Activated T-helper 1 cell treated with anti-CD3 and anti-CD28 coated beads, Interleukin-12 subunit alpha, Interleukin-12 subunit beta, Interleukin-2, Interleukin-4 antibody, amounts not matched to agents 30 ng/mL and 10 ng/mL and 1 ng/mL, durations not matched to agents 14 hours and 24 hours and 36 hours (primary cell): ENCODE measurements at regions of chr21 and their contacts with region 1.

Region 1: GRCh38 chr21:32597205-32597604 is 11.9 kb upstream of the TCP10L start:
- DNase-seq: no peak
- H3K4me3 Mint-ChIP-seq: no peak overlapping the region
- H3K27ac Mint-ChIP-seq: no peak overlapping the region
- H3K4me1 Mint-ChIP-seq: no peaks in the 10 kb centered on the region
- H3K27me3 Mint-ChIP-seq: no peaks in the 10 kb centered on the region

Region 2: GRCh38 chr21:32392880-32393676 is 204.1 kb before region 1 on chr21 and contains the start of gene URB1:
- intact Hi-C with region 1: loop called (anchors 1 kb)
- DNase-seq: peak; percentile 89
- H3K4me3 Mint-ChIP-seq: peak within 1 kb of the TSS; percentile 91
- H3K27ac Mint-ChIP-seq: peak within 1 kb of the TSS; percentile 88
- H3K4me1 Mint-ChIP-seq: peaks cover 48% of the 10 kb centered on the region
- H3K27me3 Mint-ChIP-seq: peaks cover 3% of the 10 kb centered on the region
- total RNA-seq, gene URB1: 42.1 and 42.8 TPM in 2 replicates

Region 3: DNA sequence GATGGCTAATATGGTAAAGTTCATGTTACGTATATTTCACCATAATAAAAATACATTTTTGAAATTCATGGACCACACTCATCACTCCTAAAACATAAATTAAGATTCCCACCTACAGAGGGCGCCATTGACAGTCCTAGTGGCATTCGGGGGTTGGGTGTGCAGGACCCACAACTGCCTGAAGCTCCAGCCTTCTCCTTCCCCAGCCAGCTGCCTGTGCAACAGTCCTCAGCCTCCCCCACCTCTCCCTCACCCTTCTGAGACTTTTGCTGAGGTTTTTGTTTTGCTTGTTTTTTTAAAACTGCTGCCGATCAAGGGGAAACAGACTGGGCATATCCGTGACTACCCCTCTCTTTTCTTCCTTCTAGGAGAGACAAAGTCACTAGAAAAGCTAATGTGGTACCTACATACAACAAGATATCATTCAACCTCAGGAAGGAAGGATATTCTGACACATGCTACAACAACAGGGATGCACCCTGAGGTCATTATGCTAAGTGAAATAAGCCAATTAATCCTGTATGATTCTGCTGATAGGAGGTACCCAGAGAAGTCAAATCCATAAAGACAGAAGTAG is 193.9 kb before region 1 on chr21:
- intact Hi-C with region 1: loop called (anchors 1 kb)
- DNase-seq: peak; percentile 25
- H3K4me3 Mint-ChIP-seq: no peak overlapping the region
- H3K27ac Mint-ChIP-seq: no peak overlapping the region
- H3K4me1 Mint-ChIP-seq: peaks cover 10% of the 10 kb centered on the region
- H3K27me3 Mint-ChIP-seq: peaks cover 15% of the 10 kb centered on the region

Region 4: GRCh38 chr21:32412162-32413014 is 184.8 kb before region 1 on chr21 and contains the start of gene EVA1C:
- intact Hi-C with region 1: loop called (anchors 2 kb)
- DNase-seq: peak; percentile 39
- H3K4me3 Mint-ChIP-seq: peak within 1 kb of the TSS; percentile 94
- H3K27ac Mint-ChIP-seq: peak within 1 kb of the TSS; percentile 87
- H3K4me1 Mint-ChIP-seq: peaks cover 33% of the 10 kb centered on the region
- H3K27me3 Mint-ChIP-seq: peaks cover 12% of the 10 kb centered on the region
- total RNA-seq, gene EVA1C: 6.2 and 7.6 TPM in 2 replicates

Region 5: DNA sequence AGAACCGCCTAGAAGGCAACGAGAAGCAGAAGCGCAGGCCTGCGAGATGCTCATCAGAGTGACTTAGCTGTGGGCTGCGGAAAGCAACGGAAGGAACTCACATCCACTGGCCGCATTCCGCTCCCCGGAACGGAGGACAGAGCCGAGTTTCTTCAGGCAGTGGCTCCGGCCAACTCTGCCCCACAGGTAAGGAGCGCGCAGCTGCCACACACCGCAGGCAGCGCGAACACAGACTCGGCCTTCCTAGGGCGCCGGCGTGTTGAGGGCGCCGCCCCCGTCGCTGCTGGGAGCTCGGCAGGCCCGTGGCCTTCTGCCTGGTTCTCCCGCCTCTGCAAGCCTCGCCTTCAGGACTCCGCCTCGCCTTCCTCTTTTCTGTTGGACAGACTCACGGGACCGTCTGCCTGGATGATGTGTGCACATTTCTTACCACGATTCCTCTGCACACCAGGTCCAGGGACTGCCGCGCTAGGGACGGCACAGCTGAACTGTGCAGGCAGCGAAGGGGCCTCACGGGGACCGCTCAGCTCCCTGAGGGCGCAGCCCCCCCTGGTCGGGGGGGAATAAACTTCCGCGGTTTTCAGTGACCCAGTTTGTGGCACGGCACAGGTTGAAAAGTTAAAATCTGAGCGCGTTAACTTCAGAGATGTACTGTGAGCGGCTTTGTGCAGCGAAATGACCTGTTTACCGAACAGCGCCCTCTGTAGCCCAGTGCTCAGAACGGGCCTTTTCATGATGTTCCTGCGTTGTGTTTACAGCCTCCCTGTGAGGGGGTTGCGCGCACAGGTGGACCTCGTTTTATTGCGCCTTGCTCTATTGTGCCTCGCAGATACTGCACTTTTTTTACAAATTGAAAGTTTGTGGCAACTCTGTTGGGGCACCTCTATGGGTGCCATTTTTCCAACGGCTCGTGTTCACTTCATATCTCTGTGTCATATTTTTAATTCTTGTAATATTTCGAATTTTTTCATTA is 27.7 kb before region 1 on chr21:
- intact Hi-C with region 1: loop called (anchors 2 kb)
- DNase-seq: peak; percentile 67
- H3K4me3 Mint-ChIP-seq: peak overlapping the region; percentile 88
- H3K27ac Mint-ChIP-seq: peak overlapping the region; percentile 57
- H3K4me1 Mint-ChIP-seq: peaks cover 21% of the 10 kb centered on the region
- H3K27me3 Mint-ChIP-seq: peaks cover 12% of the 10 kb centered on the region

Region 6: GRCh38 chr21:32687643-32688345 is 90.6 kb after region 1 on chr21:
- intact Hi-C with region 1: no loop called
- DNase-seq: no peak
- H3K4me3 Mint-ChIP-seq: no peak overlapping the region
- H3K27ac Mint-ChIP-seq: no peak overlapping the region
- H3K4me1 Mint-ChIP-seq: no peaks in the 10 kb centered on the region
- H3K27me3 Mint-ChIP-seq: no peaks in the 10 kb centered on the region